Activated T-helper 2 cell treated with anti-CD3 and anti-CD28 coated beads, Interferon-gamma antibody, Interleukin-2, Interleukin-4, amounts not matched to agents 10 μg/mL and 5 μg/mL and 100 μg/mL, durations not matched to agents 14 hours and 24 hours and 36 hours (primary cell): ENCODE measurements at regions of chr19 and their contacts with region 1.

Region 1: DNA sequence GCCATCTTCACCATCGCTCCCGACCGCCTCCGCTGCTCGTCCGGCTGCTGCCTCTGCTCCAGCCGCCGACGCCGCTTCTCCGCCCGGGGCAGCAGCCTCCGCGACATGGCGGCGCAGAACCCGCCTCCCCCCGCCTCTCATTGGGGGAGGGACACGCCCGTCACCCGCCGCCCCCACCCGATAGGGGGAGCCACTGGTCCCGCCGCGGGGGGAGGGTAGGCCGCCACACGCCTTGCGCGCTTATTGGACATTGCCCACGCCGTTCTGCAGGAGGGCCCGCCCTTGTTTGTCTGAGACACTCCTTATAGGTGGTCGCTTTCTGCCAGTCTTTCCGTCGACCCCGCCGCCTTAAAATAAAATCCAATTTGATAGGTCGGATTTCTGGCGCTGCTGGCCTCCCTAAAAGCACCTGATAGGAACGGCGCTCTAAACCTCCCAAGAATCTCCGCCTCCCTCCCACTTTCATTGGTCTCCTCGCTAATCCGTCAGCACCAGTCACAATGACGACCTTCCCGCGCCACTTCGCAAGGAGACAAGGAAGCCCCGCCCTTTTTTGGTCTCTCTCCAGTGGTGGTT is at the start of gene HNRNPL:
- DNase-seq: peak; percentile 99
- H3K4me3 Mint-ChIP-seq: peak within 1 kb of the TSS; percentile 90
- H3K27ac Mint-ChIP-seq: peak within 1 kb of the TSS; percentile 99
- H3K4me1 Mint-ChIP-seq: peaks cover 33% of the 10 kb centered on the region
- H3K27me3 Mint-ChIP-seq: no peaks in the 10 kb centered on the region
- total RNA-seq, gene HNRNPL: 700 and 708 TPM in 2 replicates

Region 2: DNA sequence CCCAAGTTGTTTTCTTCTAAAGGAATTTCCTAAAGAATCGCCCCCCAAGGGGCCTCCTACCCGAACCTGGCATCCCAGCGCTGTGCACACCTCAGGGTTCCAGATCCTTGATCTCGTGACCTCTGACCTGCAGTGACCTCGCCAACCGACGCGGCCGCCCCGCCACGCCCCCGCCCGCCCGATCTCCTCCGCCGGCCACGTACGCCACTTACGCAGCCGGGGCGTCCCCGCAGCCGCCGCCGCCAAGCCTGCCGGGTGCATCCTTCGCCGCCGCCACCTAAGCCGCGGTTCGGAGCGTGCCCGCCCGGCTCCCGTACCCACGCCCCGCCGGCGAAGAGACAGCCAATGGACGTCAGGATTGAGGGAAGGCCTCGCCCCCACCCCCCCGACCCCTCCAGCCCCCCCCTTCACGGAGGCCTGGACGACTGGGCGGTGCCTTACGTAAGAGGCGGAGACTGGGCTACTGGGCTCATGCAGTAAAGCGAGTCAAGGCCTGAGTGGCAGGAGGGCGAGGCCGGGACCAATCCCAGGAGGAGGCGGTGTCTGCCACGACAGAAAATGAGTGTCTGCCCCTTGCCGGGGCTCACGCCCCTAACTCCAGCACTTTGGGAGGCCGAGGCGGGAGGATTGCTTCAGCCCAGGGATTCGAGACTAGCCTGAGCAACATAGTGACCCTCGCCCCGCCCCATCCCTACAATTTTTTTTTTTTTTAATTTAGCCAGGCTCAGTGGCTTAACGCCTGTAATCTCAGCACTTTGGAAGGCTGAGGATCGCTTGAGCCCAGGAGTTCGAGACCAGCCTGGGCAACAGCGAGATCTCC is 534.1 kb before region 1 on chr19 and contains the start of gene YIF1B:
- intact Hi-C with region 1: loop called (anchors 5 kb)
- DNase-seq: peak; percentile 94
- H3K4me3 Mint-ChIP-seq: peak within 1 kb of the TSS; percentile 93
- H3K27ac Mint-ChIP-seq: peak within 1 kb of the TSS; percentile 90
- H3K4me1 Mint-ChIP-seq: peaks cover 41% of the 10 kb centered on the region
- H3K27me3 Mint-ChIP-seq: no peaks in the 10 kb centered on the region
- total RNA-seq, gene YIF1B: 106 and 114 TPM in 2 replicates

Region 3: GRCh38 chr19:38805180-38805579 is 44.8 kb before region 1 on chr19:
- intact Hi-C with region 1: no loop called
- DNase-seq: no peak
- H3K4me3 Mint-ChIP-seq: no peak overlapping the region
- H3K27ac Mint-ChIP-seq: no peak overlapping the region
- H3K4me1 Mint-ChIP-seq: peaks cover 2% of the 10 kb centered on the region
- H3K27me3 Mint-ChIP-seq: no peaks in the 10 kb centered on the region

Region 4: GRCh38 chr19:38831142-38831605 is 18.8 kb before region 1 on chr19:
- intact Hi-C with region 1: loop called (anchors 1 kb)
- DNase-seq: peak; percentile 35
- H3K4me3 Mint-ChIP-seq: peak overlapping the region; percentile 90
- H3K27ac Mint-ChIP-seq: peak overlapping the region; percentile 98
- H3K4me1 Mint-ChIP-seq: peaks cover 21% of the 10 kb centered on the region
- H3K27me3 Mint-ChIP-seq: no peaks in the 10 kb centered on the region

Region 5: DNA sequence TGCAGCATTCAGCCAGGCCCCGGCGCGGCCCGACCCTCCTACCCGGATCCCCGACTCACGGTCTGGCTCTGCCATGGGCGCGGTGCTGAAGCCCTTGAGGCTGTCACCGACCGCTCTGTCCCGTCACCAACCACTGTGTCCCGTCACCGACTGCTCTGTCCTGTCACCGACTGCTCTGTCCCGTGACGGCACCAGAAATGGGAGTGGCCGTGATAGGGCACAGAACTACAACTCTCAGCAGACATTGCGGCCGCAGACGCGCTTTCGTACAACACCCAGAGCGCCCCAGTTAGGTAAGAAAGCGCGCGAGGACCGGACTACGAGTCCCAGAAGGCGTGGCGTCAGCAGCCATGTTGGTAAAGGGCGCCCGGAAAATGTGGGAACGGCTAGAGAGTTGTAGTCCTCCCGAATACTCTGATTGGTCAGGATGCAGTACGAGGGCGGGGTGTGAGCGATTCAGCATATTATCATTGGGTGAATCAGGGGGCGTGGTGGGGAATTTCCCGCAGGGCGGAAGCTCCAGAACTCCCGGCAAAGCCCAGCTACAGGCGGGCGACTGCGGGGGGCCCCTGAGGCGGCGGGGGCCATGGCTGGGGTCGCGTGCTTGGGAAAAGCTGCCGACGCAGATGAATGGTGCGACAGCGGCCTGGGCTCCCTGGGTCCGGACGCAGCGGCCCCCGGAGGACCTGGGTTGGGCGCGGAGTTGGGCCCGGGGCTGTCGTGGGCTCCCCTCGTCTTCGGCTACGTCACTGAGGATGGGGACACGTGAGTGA is 49.7 kb after region 1 on chr19 and contains the starts of genes NFKBIB and SIRT2:
- intact Hi-C with region 1: loop called (anchors 1 kb)
- DNase-seq: peak; percentile 100
- H3K4me3 Mint-ChIP-seq: peak within 1 kb of the TSS; percentile 90
- H3K27ac Mint-ChIP-seq: peak within 1 kb of the TSS; percentile 85
- H3K4me1 Mint-ChIP-seq: peaks cover 15% of the 10 kb centered on the region
- H3K27me3 Mint-ChIP-seq: no peaks in the 10 kb centered on the region
- total RNA-seq, gene NFKBIB: 81.8 and 82.7 TPM in 2 replicates
- total RNA-seq, gene SIRT2: 29.0 and 30.2 TPM in 2 replicates

Region 6: DNA sequence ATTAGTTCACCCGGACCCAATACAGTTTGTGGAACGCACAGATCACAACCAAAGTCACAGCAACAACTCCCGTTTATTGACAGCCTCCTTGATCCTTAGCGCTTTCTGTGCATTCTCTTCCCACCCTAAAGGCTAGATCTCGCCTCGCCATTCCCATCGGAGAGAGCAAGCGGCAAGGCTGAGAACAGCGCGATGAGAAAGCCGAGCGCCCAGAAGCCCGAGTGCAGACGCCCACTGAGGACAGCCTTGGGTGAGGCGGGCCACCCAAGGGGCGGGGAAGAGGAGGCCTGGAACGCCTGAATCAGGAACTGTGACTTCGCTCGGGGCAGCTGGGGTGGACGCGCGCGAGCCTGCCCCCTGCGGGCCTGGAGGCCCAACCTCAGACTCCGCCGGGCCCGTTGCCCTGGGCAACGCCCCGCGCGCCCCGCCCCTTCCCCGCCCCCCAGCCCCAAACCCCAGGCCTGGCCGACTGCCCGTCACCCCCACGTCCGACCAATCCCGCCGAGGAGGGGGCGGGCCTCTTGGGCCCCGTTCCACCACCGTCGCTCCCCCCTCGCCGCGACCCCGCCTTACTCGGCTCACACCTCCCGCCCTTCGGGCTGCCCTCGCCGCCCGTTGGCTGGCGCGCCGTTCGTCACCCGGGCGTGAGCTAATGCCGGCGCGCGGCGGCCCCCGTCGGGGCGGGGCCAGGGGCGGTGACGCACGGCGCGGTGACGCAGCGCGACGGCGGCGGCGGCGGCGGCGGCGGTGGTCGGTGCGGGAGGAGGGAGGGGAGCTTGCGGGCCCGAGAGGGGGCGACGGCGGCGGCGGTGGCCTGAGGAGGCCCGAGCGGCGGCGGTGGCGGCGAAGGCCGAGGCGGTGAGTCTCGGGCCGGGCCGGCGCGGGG is 492.0 kb after region 1 on chr19 and contains the start of gene SAMD4B:
- intact Hi-C with region 1: loop called (anchors 10 kb)
- DNase-seq: peak; percentile 99
- H3K4me3 Mint-ChIP-seq: peak within 1 kb of the TSS; percentile 96
- H3K27ac Mint-ChIP-seq: peak within 1 kb of the TSS; percentile 94
- H3K4me1 Mint-ChIP-seq: peaks cover 59% of the 10 kb centered on the region
- H3K27me3 Mint-ChIP-seq: no peaks in the 10 kb centered on the region
- total RNA-seq, gene SAMD4B: 64.0 TPM in 2 replicates